IMR-90 (cell line): ENCODE measurements at regions of chr6 and their contacts with region 1.

Region 1: DNA sequence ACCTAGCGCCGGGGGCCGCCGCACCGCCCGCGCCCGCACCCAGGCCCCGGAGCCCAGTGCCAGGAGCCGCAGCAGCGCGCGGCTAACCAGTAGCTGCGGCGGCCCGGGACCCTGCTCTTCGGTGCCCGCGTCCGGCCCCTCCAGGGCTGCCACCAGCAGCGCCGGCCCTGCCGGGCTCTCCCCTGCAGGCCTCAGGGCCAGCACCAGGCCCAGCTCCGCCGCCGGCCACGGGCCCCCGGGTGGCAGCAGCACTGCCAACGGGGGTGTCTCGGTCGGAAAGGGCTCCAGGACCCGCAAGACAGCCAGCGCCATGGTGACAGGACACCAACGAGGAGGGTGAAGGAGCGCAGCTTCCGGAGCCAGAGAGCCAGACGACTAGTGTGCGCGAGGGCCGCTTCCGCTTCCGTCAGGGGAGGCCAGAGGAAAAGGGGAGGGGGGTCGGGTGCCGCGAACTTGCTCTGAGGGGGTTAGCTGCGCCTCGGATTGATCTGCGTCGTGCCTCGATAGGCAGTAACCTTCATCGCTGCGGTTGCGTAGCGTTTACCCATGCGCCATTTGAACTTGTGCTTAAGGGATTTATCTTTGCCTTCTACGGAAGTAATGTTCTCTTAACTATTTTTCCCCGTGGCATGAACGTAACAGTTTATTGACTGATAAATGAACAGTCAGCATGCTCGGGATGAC is at the start of gene PEX6:
- DNase-seq: peak; percentile 80
- ATAC-seq: peak; percentile 93
- H3K4me3 ChIP-seq: peak within 1 kb of the TSS; percentile 68
- H3K27ac ChIP-seq: peak within 1 kb of the TSS; percentile 83
- H3K4me1 ChIP-seq: peaks cover 5% of the 10 kb centered on the region
- H3K27me3 ChIP-seq: no peaks in the 10 kb centered on the region
- CTCF ChIP-seq: no peak
- POLR2A ChIP-seq: peak; percentile 83
- RAD21 ChIP-seq: no peak
- total RNA-seq, gene PEX6: 9.4 and 10.6 TPM in 2 replicates

Region 2: GRCh38 chr6:42928986-42929820 is 49.8 kb before region 1 on chr6 and contains the start of gene CNPY3:
- CTCF ChIA-PET with region 1: no interaction called
- POLR2A ChIA-PET with region 1: interaction called, 4 read pairs
- dilution Hi-C with region 1: no loop called
- in situ Hi-C with region 1: loop called (anchors 5 kb)
- intact Hi-C with region 1: loop called (anchors 2 kb)
- DNase-seq: peak; percentile 98
- ATAC-seq: peak; percentile 93
- H3K4me3 ChIP-seq: peak within 1 kb of the TSS; percentile 74
- H3K27ac ChIP-seq: peak within 1 kb of the TSS; percentile 82
- H3K4me1 ChIP-seq: peaks cover 7% of the 10 kb centered on the region
- H3K27me3 ChIP-seq: no peaks in the 10 kb centered on the region
- CTCF ChIP-seq: no peak
- POLR2A ChIP-seq: peak; percentile 56; the same call in 1 of the 2 replicates
- RAD21 ChIP-seq: no peak
- total RNA-seq, gene CNPY3: 13.3 and 15.3 TPM in 2 replicates